Activated CD4-positive, alpha-beta T cell treated with anti-CD3 and anti-CD28 coated beads for 36 hours (primary cell): ENCODE measurements at regions of chr17 and their contacts with region 1.

Region 1: GRCh38 chr17:17681187-17681848 is at the start of gene RAI1:
- DNase-seq: peak; percentile 84
- ATAC-seq: peak; percentile 63
- H3K4me3 Mint-ChIP-seq: peak within 1 kb of the TSS; percentile 86
- H3K27ac Mint-ChIP-seq: peak within 1 kb of the TSS; percentile 86
- H3K4me1 Mint-ChIP-seq: peaks cover 27% of the 10 kb centered on the region
- H3K27me3 Mint-ChIP-seq: no peaks in the 10 kb centered on the region
- total RNA-seq, gene RAI1: 13.6 to 16.4 TPM

Region 2: DNA sequence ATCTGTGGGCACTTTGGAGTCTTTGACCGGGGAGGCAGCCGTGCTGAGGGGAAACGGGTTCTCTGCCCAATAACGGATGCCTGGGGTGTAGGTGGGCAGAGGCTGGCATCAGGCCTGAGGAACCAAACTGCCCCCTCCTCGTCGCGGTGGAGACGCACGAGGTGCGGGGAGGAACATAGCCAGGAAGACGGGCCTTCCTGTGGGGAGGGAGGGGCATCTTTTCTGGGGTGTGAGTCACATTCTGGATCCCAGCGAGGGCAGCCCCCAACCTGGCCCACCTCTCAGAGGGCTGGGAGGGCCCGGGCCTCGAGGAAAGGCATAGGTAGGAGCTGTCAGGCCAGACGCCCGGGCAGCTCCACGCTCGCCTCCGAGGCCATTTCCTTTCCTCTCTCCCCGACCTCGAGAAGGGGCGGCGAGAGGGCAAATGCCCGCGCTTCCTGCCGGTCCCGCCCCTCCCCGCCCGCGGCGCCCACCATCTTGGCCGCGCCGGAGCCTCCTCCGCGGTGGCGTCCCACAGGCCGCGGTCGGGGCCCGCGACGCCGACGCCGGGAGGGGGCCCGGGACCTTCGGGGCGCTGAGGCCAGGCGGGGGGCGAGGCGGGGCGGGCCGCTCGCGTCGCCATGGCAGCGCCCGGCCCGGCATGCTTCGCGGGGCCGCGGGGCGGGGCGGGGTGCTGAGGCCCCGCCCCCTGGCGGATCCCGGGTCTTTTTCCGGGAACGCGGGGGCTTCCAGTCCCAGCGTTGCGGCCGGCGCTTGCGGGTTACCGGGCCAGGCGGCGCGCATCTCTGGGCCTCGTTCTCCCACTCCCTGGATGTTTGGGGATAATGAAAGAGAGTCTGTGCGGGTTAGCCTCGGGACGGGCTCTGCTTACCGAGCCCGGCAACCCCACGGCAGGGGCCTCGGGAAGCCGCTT is 13.1 kb after region 1 on chr17:
- CTCF ChIA-PET with region 1: interaction called, 12 read pairs
- POLR2A ChIA-PET with region 1: interaction called, 3 read pairs
- intact Hi-C with region 1: loop called (anchors 1 kb)
- DNase-seq: peak; percentile 79
- ATAC-seq: peak; percentile 69
- H3K4me3 Mint-ChIP-seq: peak overlapping the region; percentile 81
- H3K27ac Mint-ChIP-seq: peak overlapping the region; percentile 98
- H3K4me1 Mint-ChIP-seq: peaks cover 66% of the 10 kb centered on the region
- H3K27me3 Mint-ChIP-seq: no peaks in the 10 kb centered on the region

Region 3: GRCh38 chr17:17752089-17752820 is 70.9 kb after region 1 on chr17:
- CTCF ChIA-PET with region 1: interaction called, 3 read pairs
- POLR2A ChIA-PET with region 1: no interaction called
- intact Hi-C with region 1: loop called (anchors 1 to 2 kb)
- DNase-seq: peak; percentile 99
- ATAC-seq: peak; percentile 89
- H3K4me3 Mint-ChIP-seq: peak overlapping the region; percentile 85
- H3K27ac Mint-ChIP-seq: peak overlapping the region; percentile 99
- H3K4me1 Mint-ChIP-seq: peaks cover 68% of the 10 kb centered on the region
- H3K27me3 Mint-ChIP-seq: no peaks in the 10 kb centered on the region

Region 4: GRCh38 chr17:17790637-17791464 is 109.5 kb after region 1 on chr17:
- CTCF ChIA-PET with region 1: no interaction called
- POLR2A ChIA-PET with region 1: no interaction called
- intact Hi-C with region 1: no loop called
- DNase-seq: no peak
- ATAC-seq: no peak
- H3K4me3 Mint-ChIP-seq: no peak overlapping the region
- H3K27ac Mint-ChIP-seq: no peak overlapping the region
- H3K4me1 Mint-ChIP-seq: peaks cover 22% of the 10 kb centered on the region
- H3K27me3 Mint-ChIP-seq: no peaks in the 10 kb centered on the region

Region 5: GRCh38 chr17:17812211-17813057 is 131.1 kb after region 1 on chr17:
- CTCF ChIA-PET with region 1: interaction called, 9 read pairs
- POLR2A ChIA-PET with region 1: no interaction called
- intact Hi-C with region 1: loop called in 1 of 2 experiments (anchors 1 kb)
- DNase-seq: peak; percentile 78
- ATAC-seq: peak; percentile 37
- H3K4me3 Mint-ChIP-seq: no peak overlapping the region
- H3K27ac Mint-ChIP-seq: no peak overlapping the region
- H3K4me1 Mint-ChIP-seq: peaks cover 11% of the 10 kb centered on the region
- H3K27me3 Mint-ChIP-seq: no peaks in the 10 kb centered on the region

Region 6: DNA sequence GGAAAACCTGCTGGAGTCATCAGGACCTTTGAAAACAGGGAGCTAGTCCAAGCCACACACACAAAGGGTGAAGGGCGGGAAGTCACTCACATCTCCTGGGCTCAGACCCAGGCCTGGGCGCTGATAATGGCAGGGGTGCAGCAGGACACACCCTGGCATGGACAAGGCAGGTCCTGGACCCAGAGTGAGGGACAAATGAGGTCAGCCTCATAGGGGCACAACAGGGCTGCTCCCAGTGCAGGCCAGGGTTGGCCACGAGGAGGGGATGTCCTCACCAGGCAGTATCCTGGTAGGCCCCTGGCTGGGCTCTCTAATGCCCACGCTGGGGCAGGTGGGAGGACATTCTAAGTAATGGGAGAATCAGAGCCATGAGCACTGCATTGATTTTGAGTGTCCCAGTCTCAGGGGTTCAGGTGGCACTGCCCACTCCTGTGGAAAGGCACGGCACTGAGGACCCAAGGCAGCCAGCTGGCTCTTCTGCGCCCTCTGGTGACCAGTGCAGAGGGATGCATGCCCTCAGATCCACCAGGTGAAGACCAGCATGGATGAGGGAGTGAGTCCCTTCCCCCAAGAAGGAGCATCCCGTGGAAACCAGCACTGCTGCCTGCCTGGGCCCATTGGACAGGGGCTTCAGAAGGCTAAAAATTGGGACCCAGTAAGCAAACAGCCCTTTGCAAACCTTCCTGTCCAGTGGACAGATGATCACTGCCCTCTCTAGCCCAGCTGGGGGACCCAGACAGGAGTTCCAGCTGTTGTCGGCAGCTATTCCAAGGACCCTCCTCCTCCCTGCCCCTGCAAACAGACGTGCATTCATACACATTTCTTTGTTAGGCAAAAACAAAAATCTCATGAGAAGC is 178.8 kb after region 1 on chr17:
- CTCF ChIA-PET with region 1: interaction called, 9 read pairs
- POLR2A ChIA-PET with region 1: no interaction called
- intact Hi-C with region 1: loop called (anchors 1 kb)
- DNase-seq: peak; percentile 83
- ATAC-seq: peak; percentile 91
- H3K4me3 Mint-ChIP-seq: no peak overlapping the region
- H3K27ac Mint-ChIP-seq: no peak overlapping the region
- H3K4me1 Mint-ChIP-seq: peaks cover 27% of the 10 kb centered on the region
- H3K27me3 Mint-ChIP-seq: no peaks in the 10 kb centered on the region

Region 7: DNA sequence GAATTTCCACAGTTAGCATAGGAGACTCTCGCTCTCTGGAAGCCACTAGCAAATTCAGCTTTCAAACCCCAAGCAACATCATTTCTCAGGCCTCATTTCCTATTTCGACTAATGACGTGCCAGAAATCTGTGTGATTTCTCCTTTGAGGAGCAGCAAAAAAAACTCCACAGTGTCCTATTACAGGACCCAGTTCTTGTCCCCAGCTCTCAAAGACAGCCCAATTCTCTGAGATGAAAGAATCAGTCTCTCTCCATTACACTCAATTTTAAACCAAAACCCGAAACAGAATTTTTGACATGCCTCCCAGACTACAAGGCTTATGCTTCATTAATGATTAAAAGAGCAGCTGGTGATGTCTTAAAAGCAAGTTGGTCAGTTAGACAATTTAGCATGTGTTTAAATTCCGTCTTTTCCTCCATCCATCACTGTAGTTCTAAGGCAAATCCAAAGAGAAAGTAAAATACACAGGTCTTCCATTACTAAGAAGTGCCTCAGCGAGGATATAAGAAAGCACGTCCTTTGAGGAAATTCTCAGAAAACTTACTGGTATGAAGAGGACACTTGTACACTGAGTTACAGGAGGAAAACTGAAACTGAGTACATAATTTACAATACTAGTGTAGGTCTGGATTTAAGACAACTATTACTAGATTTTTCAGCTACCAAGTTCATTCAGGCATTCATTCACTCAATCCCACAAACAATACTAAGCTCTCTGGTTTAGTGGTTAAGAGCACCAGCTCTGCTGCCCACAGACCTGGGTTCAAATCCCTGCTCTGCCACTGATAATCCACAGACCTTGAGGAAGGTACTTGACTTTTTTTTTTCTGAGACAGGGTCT is 278.4 kb after region 1 on chr17:
- CTCF ChIA-PET with region 1: no interaction called
- POLR2A ChIA-PET with region 1: no interaction called
- intact Hi-C with region 1: loop called in 1 of 2 experiments (anchors 2 kb)
- DNase-seq: peak; percentile 67
- ATAC-seq: peak; percentile 61
- H3K4me3 Mint-ChIP-seq: peak overlapping the region; percentile 71
- H3K27ac Mint-ChIP-seq: peak overlapping the region; percentile 95
- H3K4me1 Mint-ChIP-seq: peaks cover 69% of the 10 kb centered on the region
- H3K27me3 Mint-ChIP-seq: no peaks in the 10 kb centered on the region

Region 8: GRCh38 chr17:18033442-18034099 is 352.3 kb after region 1 on chr17:
- CTCF ChIA-PET with region 1: interaction called, 5 read pairs
- POLR2A ChIA-PET with region 1: no interaction called
- intact Hi-C with region 1: loop called (anchors 1 to 2 kb)
- DNase-seq: peak; percentile 69
- ATAC-seq: peak; percentile 69
- H3K4me3 Mint-ChIP-seq: no peak overlapping the region
- H3K27ac Mint-ChIP-seq: no peak overlapping the region
- H3K4me1 Mint-ChIP-seq: peaks cover 31% of the 10 kb centered on the region
- H3K27me3 Mint-ChIP-seq: no peaks in the 10 kb centered on the region